ENCODE measurements at regions of chr21 and their contacts with region 1.

Region 1: DNA sequence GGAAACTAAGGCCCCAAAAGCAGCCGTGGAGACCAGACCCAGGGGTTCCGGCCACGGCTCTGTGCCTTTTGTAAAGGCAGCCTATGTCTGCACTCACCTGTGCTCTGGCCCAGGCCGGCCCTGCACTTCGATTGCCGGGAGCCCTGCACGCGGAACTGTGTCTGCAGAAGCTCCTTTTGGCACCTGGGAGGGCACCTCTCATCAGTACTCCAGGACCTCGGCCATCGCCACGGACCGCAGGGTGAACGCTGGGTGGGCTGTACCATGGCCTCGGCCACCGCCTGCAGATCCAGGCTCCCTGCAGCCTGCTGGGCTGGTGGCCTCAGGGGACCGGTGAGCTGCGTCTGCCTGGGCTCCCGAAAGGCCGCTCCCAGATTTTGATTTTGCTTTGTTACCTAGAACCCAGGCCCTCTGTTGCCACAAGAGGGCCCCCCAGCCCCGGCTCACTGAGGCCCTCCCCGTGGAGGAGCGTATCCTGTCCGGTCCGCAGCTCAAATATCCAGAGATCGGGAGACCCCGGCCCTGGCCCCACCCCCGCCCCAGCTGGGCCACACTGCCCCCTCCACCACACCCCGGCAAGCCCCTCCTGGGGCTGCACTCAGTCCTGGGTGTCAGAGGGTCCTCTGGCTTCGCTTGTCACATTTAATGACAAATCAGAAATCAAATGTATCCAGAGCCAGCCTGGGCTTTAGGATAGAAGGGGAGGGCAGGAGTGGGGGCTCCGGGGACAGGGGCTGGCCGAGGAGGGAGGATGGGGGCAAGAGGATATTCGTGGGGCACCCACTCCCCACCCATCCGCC is 60.2 kb upstream of the PDE9A start:
- DNase-seq: peak; percentile 43
- H3K4me3 ChIP-seq: no peak overlapping the region
- H3K27ac ChIP-seq: no peak overlapping the region
- H3K4me1 ChIP-seq: no peaks in the 10 kb centered on the region
- H3K27me3 ChIP-seq: no peaks in the 10 kb centered on the region
- CTCF ChIP-seq: peak; percentile 57 to 87
- POLR2A ChIP-seq: no peak

Region 2: DNA sequence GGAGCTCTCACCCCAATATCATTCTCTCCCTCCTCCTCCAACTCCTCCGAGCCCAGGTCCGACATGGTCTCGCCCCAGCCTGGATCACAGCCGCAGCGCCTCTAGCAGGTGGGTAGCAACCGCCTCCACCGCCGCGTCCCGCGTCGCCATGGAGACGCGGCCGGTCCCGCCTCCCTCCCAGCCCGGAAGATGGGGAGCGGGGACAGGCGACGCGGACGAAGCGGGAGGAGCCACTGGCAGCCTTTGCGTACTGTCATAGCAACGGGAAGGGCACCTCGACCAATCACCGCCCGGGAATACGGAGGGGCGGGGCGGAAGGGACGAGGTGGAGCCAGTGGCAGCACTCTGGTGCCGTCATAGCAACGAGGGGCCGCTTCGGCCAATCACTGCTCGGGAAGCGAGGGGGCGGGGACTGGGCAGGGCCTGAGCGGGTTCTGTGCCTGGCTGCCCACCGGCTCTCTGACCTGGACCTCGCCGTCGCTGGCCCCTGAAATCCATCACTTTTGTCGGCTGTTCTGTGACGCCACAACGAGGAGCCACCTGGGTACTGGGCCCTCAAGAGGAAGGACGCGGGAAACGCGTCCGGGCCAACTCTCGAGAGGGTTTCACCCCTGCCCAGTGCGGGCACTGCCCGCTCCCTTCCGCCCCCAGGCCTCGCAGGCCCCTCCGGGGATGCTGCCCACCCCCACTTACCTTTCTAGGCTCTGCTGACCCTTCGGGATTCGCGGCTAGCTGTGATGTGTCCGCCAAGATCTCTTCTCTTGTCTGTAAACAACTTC is 96.9 kb before region 1 on chr21 and contains the start of gene RSPH1:
- CTCF ChIA-PET with region 1: no interaction called
- POLR2A ChIA-PET with region 1: no interaction called
- dilution Hi-C with region 1: no loop called
- intact Hi-C with region 1: no loop called
- DNase-seq: peak; percentile 99
- H3K4me3 ChIP-seq: peak within 1 kb of the TSS; percentile 50 to 59 (median 54)
- H3K27ac ChIP-seq: peak within 1 kb of the TSS; percentile 14
- H3K4me1 ChIP-seq: peaks cover 13% of the 10 kb centered on the region
- H3K27me3 ChIP-seq: peaks cover 6 to 7% of the 10 kb centered on the region in 2 experiments
- CTCF ChIP-seq: no peak
- POLR2A ChIP-seq: no peak
- total RNA-seq, gene RSPH1: not detected in 2 replicates

Region 3: GRCh38 chr21:42561762-42562650 is 31.2 kb before region 1 on chr21:
- CTCF ChIA-PET with region 1: no interaction called
- POLR2A ChIA-PET with region 1: no interaction called
- dilution Hi-C with region 1: no loop called
- intact Hi-C with region 1: no loop called
- DNase-seq: no peak
- H3K4me3 ChIP-seq: no peak overlapping the region
- H3K27ac ChIP-seq: no peak overlapping the region
- H3K4me1 ChIP-seq: no peaks in the 10 kb centered on the region
- H3K27me3 ChIP-seq: no peaks in the 10 kb centered on the region
- CTCF ChIP-seq: no peak
- POLR2A ChIP-seq: no peak

Region 4: DNA sequence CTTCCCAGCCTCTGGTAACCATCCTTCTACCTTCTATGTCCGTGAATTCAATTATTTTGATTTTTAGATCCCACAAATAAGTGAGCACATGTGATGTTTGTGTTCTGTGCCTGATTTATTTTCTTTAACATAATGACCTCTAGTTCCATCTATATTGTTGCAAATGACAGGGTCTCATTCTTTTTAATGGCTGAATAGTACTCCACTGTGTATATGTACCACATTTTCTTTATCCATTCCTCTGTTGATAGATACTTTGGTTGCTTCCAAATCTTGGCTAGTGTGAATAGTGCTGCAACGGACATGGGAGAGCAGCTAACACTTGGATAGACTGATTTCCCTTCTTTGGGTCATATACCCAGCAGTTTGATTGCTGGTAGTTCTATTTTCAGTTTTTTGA is 234.4 kb after region 1 on chr21:
- CTCF ChIA-PET with region 1: interaction called, 48 read pairs
- POLR2A ChIA-PET with region 1: no interaction called
- dilution Hi-C with region 1: no loop called
- intact Hi-C with region 1: no loop called
- DNase-seq: no peak
- H3K4me3 ChIP-seq: no peak overlapping the region
- H3K27ac ChIP-seq: no peak overlapping the region
- H3K4me1 ChIP-seq: no peaks in the 10 kb centered on the region
- H3K27me3 ChIP-seq: peaks cover 3 to 10% of the 10 kb centered on the region in 2 experiments
- CTCF ChIP-seq: no peak
- POLR2A ChIP-seq: no peak

Region 5: GRCh38 chr21:42861848-42862400 is 268.7 kb after region 1 on chr21:
- CTCF ChIA-PET with region 1: interaction called, 17 read pairs
- POLR2A ChIA-PET with region 1: no interaction called
- dilution Hi-C with region 1: no loop called
- intact Hi-C with region 1: no loop called
- DNase-seq: no peak
- H3K4me3 ChIP-seq: no peak overlapping the region
- H3K27ac ChIP-seq: no peak overlapping the region
- H3K4me1 ChIP-seq: peaks cover 16% of the 10 kb centered on the region
- H3K27me3 ChIP-seq: no peaks in the 10 kb centered on the region
- CTCF ChIP-seq: peak in 1 of 2 donors; percentile 16
- POLR2A ChIP-seq: no peak